Heart right ventricle (tissue), 16 donors: ENCODE measurements at regions of chr18 and their contacts with region 1.

Region 1: DNA sequence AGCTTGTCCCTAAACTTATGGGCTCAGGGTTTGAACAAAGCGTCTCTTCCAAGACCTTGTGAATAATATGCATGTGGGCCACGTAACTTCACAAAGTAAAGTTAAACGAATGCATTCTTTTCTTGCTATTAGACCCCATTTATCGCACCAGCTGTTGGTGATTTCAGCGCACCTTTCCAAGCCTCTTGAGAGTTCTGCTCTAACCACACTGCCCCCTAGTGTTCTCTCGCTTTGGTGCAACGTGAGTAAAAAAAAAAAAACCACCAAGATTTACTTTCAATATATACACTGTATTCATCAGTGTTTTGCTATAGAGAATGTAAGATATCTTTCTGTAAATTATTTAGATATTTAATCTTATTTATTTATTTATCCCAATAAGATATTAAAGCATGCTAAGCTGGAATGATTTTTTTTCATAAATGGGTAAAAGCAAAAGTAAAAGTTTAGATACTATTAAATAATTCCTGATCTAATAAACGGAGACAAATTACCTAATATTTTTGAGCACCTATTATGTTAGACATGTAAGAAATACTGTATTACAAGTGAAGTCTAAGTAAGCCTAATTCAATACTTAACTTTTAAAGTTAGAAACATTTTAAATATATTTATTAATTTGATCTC is 459.5 kb downstream of the DLGAP1 start:
- DNase-seq: peak in 1 of 2 donors; percentile 64
- ATAC-seq: peak in 4 of 8 donors; percentile 61 to 80 (median 66)
- H3K4me3 ChIP-seq: peak overlapping the region in 2 of 10 donors; percentile 13 to 24
- H3K27ac ChIP-seq: no peak overlapping the region
- H3K4me1 ChIP-seq: peaks cover 0 to 18% (median 3%) of the 10 kb centered on the region in 9 donors
- H3K27me3 ChIP-seq: no peaks in the 10 kb centered on the region
- CTCF ChIP-seq: peak; percentile 72 to 92 (median 89)

Region 2: DNA sequence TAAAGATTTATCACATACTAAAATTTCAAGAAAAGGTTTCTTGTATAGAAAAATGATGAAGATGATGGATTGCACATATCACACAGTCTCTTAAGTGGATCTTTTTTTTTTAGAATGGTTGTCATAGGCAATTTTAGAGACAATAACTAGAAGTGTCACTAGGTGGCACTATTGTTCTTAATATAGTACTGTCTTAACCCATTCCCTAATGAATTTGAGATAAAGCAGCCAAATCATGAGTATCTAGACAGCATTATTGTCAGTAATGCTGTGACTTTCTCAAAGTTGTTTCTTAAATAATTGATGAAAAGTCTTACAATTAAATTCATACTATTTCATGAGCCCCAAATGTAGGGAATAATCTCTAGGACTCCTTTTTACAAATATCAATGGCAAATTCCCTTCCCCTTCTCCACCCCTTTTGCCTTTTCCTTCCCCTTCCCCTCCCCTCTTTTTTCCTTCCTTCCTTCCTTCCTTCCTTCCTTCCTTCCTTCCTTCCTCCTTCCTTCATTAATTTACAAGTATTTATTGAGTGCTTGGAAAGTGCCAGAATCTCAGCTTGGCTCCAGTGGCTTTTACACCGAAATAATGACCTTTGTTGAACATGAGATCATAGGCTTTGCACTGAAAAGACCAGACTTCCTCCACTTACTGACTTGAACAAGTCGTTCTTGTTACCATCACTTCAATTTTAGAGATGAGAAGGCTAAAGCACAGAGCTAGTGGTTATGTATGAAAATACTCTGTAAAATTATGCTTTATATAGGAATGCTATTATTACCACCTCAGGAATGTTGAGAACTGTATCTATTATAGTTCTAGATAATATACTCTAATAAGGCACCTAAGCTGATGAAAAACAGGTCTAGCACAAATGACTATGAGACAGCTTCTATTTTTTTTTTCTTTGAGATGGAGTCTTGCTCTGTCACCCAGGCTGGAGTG is 713.9 kb before region 1 on chr18:
- intact Hi-C with region 1: loop called in 2 of 10 experiments (anchors 5 to 10 kb)
- DNase-seq: peak in 1 of 2 donors; percentile 33
- ATAC-seq: peak; percentile 78 to 89 (median 86)
- H3K4me3 ChIP-seq: no peak overlapping the region
- H3K27ac ChIP-seq: peak overlapping the region in 6 of 10 donors; percentile 1 to 56 (median 32)
- H3K4me1 ChIP-seq: peaks cover 0 to 27% (median 14%) of the 10 kb centered on the region in 9 donors
- H3K27me3 ChIP-seq: no peaks in the 10 kb centered on the region
- CTCF ChIP-seq: peak; percentile 39 to 87 (median 73)

Region 3: GRCh38 chr18:3447895-3448837 is 547.4 kb before region 1 on chr18:
- intact Hi-C with region 1: loop called in 2 of 10 experiments (anchors 10 kb)
- DNase-seq: peak; percentile 94 to 96
- ATAC-seq: peak; percentile 79 to 91 (median 86)
- H3K4me3 ChIP-seq: peak overlapping the region; percentile 62 to 97 (median 81)
- H3K27ac ChIP-seq: peak overlapping the region; percentile 87 to 100 (median 97)
- H3K4me1 ChIP-seq: peaks cover 0 to 29% (median 17%) of the 10 kb centered on the region in 9 donors
- H3K27me3 ChIP-seq: no peaks in the 10 kb centered on the region
- CTCF ChIP-seq: peak in 3 of 9 donors; percentile 3 to 22 (median 6)

Region 4: GRCh38 chr18:3771121-3771971 is 224.2 kb before region 1 on chr18:
- intact Hi-C with region 1: loop called in 9 of 10 experiments (anchors 1 to 5 kb)
- DNase-seq: peak; percentile 81 to 86
- ATAC-seq: peak; percentile 98 to 100 (median 100)
- H3K4me3 ChIP-seq: peak overlapping the region in 9 of 10 donors; percentile 0 to 52 (median 47)
- H3K27ac ChIP-seq: peak overlapping the region in 6 of 10 donors; percentile 51 to 76 (median 70)
- H3K4me1 ChIP-seq: peaks cover 0 to 24% (median 11%) of the 10 kb centered on the region in 9 donors
- H3K27me3 ChIP-seq: peaks cover 0 to 11% (median 0%) of the 10 kb centered on the region in 7 donors
- CTCF ChIP-seq: peak; percentile 95 to 98 (median 97)

Region 5: GRCh38 chr18:3816610-3817363 is 178.8 kb before region 1 on chr18:
- intact Hi-C with region 1: no loop called
- DNase-seq: no peak
- ATAC-seq: peak in 1 of 8 donors; percentile 81
- H3K4me3 ChIP-seq: no peak overlapping the region
- H3K27ac ChIP-seq: no peak overlapping the region
- H3K4me1 ChIP-seq: peaks cover 0 to 4% (median 0%) of the 10 kb centered on the region in 9 donors
- H3K27me3 ChIP-seq: no peaks in the 10 kb centered on the region
- CTCF ChIP-seq: no peak

Region 6: GRCh38 chr18:3869848-3870247 is 125.7 kb before region 1 on chr18:
- intact Hi-C with region 1: loop called in 2 of 10 experiments (anchors 5 to 10 kb)
- DNase-seq: no peak
- ATAC-seq: peak in 5 of 8 donors; percentile 33 to 79 (median 61)
- H3K4me3 ChIP-seq: no peak overlapping the region
- H3K27ac ChIP-seq: no peak overlapping the region
- H3K4me1 ChIP-seq: peaks cover 0 to 26% (median 4%) of the 10 kb centered on the region in 9 donors
- H3K27me3 ChIP-seq: no peaks in the 10 kb centered on the region
- CTCF ChIP-seq: peak; percentile 11 to 64 (median 49)